Calu3 (cell line): ENCODE measurements at regions of chr2 and their contacts with region 1.

Region 1: GRCh38 chr2:212392043-212392442 is 146.6 kb downstream of the ERBB4 start:
- DNase-seq: no peak
- H3K4me3 Mint-ChIP-seq: no peak overlapping the region
- H3K27ac Mint-ChIP-seq: no peak overlapping the region
- H3K4me1 Mint-ChIP-seq: no peaks in the 10 kb centered on the region
- H3K27me3 Mint-ChIP-seq: no peaks in the 10 kb centered on the region
- CTCF ChIP-seq: no peak

Region 2: GRCh38 chr2:210730672-210731071 is 1661.4 kb before region 1 on chr2:
- CTCF ChIA-PET with region 1: no interaction called
- intact Hi-C with region 1: loop called (anchors 5 kb)
- DNase-seq: no peak
- H3K4me3 Mint-ChIP-seq: no peak overlapping the region
- H3K27ac Mint-ChIP-seq: no peak overlapping the region
- H3K4me1 Mint-ChIP-seq: no peaks in the 10 kb centered on the region
- H3K27me3 Mint-ChIP-seq: no peaks in the 10 kb centered on the region
- CTCF ChIP-seq: no peak

Region 3: GRCh38 chr2:212147921-212148513 is 244.0 kb before region 1 on chr2:
- CTCF ChIA-PET with region 1: no interaction called
- intact Hi-C with region 1: loop called (anchors 10 kb)
- DNase-seq: peak; percentile 20
- H3K4me3 Mint-ChIP-seq: no peak overlapping the region
- H3K27ac Mint-ChIP-seq: no peak overlapping the region
- H3K4me1 Mint-ChIP-seq: peaks cover 11% of the 10 kb centered on the region
- H3K27me3 Mint-ChIP-seq: no peaks in the 10 kb centered on the region
- CTCF ChIP-seq: peak; percentile 33